ENCODE measurements at regions of chr3 and their contacts with region 1.

Region 1: GRCh38 chr3:52471371-52472238 is 16.2 kb downstream of the NISCH start:
- DNase-seq: no peak
- H3K4me3 ChIP-seq: no peak overlapping the region
- H3K27ac ChIP-seq: peak overlapping the region in 1 of 4 donors; percentile 3
- H3K4me1 ChIP-seq: peaks cover 32 to 64% (median 50%) of the 10 kb centered on the region in 4 donors
- H3K27me3 ChIP-seq: no peaks in the 10 kb centered on the region
- CTCF ChIP-seq: peak; percentile 63 to 84 (median 65)
- EP300 ChIP-seq: no peak
- POLR2A ChIP-seq: no peak

Region 2: GRCh38 chr3:52533623-52534280 is 62.1 kb after region 1 on chr3 and contains the start of gene NT5DC2:
- intact Hi-C with region 1: loop called (anchors 5 kb)
- DNase-seq: no peak
- H3K4me3 ChIP-seq: peak within 1 kb of the TSS; percentile 69 to 88 (median 76)
- H3K27ac ChIP-seq: peak within 1 kb of the TSS; percentile 87 to 95 (median 88)
- H3K4me1 ChIP-seq: peaks cover 77 to 92% (median 89%) of the 10 kb centered on the region in 4 donors
- H3K27me3 ChIP-seq: no peaks in the 10 kb centered on the region
- CTCF ChIP-seq: no peak
- EP300 ChIP-seq: no peak
- POLR2A ChIP-seq: no peak
- total RNA-seq, gene NT5DC2: 58.0 to 87.4 (median 72.9) TPM

Region 3: GRCh38 chr3:52685709-52686691 is 214.4 kb after region 1 on chr3 and contains the starts of genes GNL3 and PBRM1:
- intact Hi-C with region 1: loop called (anchors 10 kb)
- DNase-seq: peak; percentile 98
- H3K4me3 ChIP-seq: peak within 1 kb of the TSS; percentile 69 to 81 (median 78)
- H3K27ac ChIP-seq: peak within 1 kb of the TSS; percentile 92 to 98 (median 96)
- H3K4me1 ChIP-seq: peaks cover 40 to 59% (median 49%) of the 10 kb centered on the region in 4 donors
- H3K27me3 ChIP-seq: no peaks in the 10 kb centered on the region
- CTCF ChIP-seq: no peak
- EP300 ChIP-seq: peak; percentile 65
- POLR2A ChIP-seq: peak; percentile 18
- total RNA-seq, gene GNL3: 28.4 to 71.1 (median 29.3) TPM
- total RNA-seq, gene PBRM1: 79.4 to 99.3 (median 82.8) TPM